Activated CD4-positive, alpha-beta memory T cell treated with anti-CD3 and anti-CD28 coated beads for 36 hours (primary cell): ENCODE measurements at regions of chr1 and their contacts with region 1.

Region 1: DNA sequence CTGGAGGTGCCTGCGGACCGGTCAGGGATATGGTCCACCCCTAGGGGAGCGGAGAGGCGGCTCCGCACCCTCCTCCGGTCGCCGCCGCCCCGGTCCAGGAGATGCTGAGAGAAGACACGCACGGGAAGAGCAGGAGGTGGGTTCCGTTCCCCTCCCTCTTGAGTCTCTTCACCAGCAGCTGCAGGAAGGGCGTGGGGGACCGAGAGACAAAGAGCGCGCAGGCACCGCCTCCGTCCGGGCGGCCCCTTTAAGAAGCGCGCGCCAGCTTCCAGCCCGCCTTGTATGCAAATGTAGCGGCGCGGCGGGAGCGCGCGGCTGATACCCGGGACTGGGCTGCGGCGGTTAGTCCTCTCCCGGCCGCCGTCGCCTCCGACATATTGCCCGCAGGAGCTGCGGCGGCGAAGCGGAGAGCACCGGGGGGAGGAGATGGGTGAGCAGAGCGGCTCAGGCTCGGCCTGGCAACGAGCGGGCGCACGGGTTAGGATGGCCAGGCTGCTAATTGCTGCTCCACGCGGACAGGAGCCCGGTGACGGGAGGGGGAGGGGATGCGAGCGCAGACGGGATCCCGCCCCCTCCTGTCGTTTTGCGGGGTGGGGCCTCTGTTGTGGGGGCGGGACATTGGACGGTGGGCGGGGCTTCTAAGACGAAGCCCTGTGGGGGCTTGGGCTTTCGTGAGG is at the start of gene TMEM39B:
- DNase-seq: peak; percentile 96
- H3K4me3 Mint-ChIP-seq: peak within 1 kb of the TSS; percentile 79
- H3K27ac Mint-ChIP-seq: peak within 1 kb of the TSS; percentile 89
- H3K4me1 Mint-ChIP-seq: peaks cover 32% of the 10 kb centered on the region
- H3K27me3 Mint-ChIP-seq: no peaks in the 10 kb centered on the region
- total RNA-seq, gene TMEM39B: 18.9 to 19.7 TPM

Region 2: GRCh38 chr1:31938174-31938950 is 134.4 kb before region 1 on chr1 and contains the start of gene PTP4A2:
- CTCF ChIA-PET with region 1: no interaction called
- POLR2A ChIA-PET with region 1: no interaction called
- intact Hi-C with region 1: loop called (anchors 5 kb)
- DNase-seq: peak; percentile 94
- H3K4me3 Mint-ChIP-seq: peak within 1 kb of the TSS; percentile 98
- H3K27ac Mint-ChIP-seq: peak within 1 kb of the TSS; percentile 96
- H3K4me1 Mint-ChIP-seq: peaks cover 66% of the 10 kb centered on the region
- H3K27me3 Mint-ChIP-seq: no peaks in the 10 kb centered on the region
- total RNA-seq, gene PTP4A2: 275 to 285 TPM

Region 3: GRCh38 chr1:32013386-32014198 is 59.2 kb before region 1 on chr1 and contains the start of gene KHDRBS1:
- CTCF ChIA-PET with region 1: no interaction called
- POLR2A ChIA-PET with region 1: interaction called, 7 read pairs
- intact Hi-C with region 1: loop called (anchors 1 kb)
- DNase-seq: peak; percentile 99
- H3K4me3 Mint-ChIP-seq: peak within 1 kb of the TSS; percentile 96
- H3K27ac Mint-ChIP-seq: peak within 1 kb of the TSS; percentile 91
- H3K4me1 Mint-ChIP-seq: peaks cover 23% of the 10 kb centered on the region
- H3K27me3 Mint-ChIP-seq: peaks cover 2% of the 10 kb centered on the region
- total RNA-seq, gene KHDRBS1: 200 to 203 TPM

Region 4: GRCh38 chr1:32107742-32108661 is 35.2 kb after region 1 on chr1 and contains the start of gene KPNA6:
- CTCF ChIA-PET with region 1: interaction called, 28 read pairs
- POLR2A ChIA-PET with region 1: interaction called, 37 read pairs
- intact Hi-C with region 1: loop called (anchors 1 kb)
- DNase-seq: peak; percentile 95
- H3K4me3 Mint-ChIP-seq: peak within 1 kb of the TSS; percentile 100
- H3K27ac Mint-ChIP-seq: peak within 1 kb of the TSS; percentile 96
- H3K4me1 Mint-ChIP-seq: peaks cover 37% of the 10 kb centered on the region
- H3K27me3 Mint-ChIP-seq: no peaks in the 10 kb centered on the region
- total RNA-seq, gene KPNA6: 69.8 to 77.6 TPM

Region 5: GRCh38 chr1:32179443-32180185 is 106.9 kb after region 1 on chr1 and contains the start of gene TXLNA:
- CTCF ChIA-PET with region 1: no interaction called
- POLR2A ChIA-PET with region 1: interaction called, 12 read pairs
- intact Hi-C with region 1: loop called (anchors 2 kb)
- DNase-seq: peak; percentile 95
- H3K4me3 Mint-ChIP-seq: peak within 1 kb of the TSS; percentile 91
- H3K27ac Mint-ChIP-seq: peak within 1 kb of the TSS; percentile 96
- H3K4me1 Mint-ChIP-seq: peaks cover 38% of the 10 kb centered on the region
- H3K27me3 Mint-ChIP-seq: no peaks in the 10 kb centered on the region
- total RNA-seq, gene TXLNA: 77.4 to 78.2 TPM

Region 6: DNA sequence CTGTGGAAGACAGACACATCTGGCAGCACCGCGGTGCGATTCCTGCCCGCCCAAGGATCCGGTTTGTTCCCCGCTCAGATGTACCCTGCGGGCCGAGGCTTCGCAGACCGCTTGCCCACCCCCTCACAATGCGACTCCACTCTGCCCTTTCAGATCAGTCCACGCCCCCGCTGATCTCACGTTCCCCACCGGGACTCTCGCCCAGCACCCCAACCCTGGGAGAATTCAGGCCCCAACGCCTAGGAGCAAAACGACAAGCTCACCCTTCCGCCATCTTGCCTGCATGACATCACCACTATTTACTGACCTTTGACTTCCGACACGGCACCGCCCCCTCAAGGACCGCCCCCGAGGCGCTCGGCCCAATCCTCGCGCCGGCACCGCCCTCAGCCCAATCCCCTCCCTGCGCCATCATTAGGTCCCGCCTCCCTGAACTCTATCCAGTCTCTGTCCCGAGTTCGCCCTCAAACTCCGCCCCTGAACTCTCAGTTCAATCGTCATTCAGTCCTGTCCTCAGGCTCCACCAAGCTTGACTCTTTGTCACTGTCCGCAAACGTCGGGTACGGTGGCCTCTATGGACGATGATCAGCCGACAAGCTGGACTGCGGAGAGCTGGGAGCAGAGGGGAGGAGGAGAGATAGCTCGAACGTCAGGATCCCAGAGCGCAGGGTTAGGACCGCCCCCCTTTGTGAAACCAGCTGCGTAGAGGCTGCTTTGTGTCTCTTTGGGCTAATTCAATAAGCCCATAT is 321.6 kb after region 1 on chr1 and contains the start of gene BSDC1:
- CTCF ChIA-PET with region 1: interaction called, 3 read pairs
- POLR2A ChIA-PET with region 1: no interaction called
- intact Hi-C with region 1: loop called (anchors 1 kb)
- DNase-seq: peak; percentile 99
- H3K4me3 Mint-ChIP-seq: peak within 1 kb of the TSS; percentile 94
- H3K27ac Mint-ChIP-seq: peak within 1 kb of the TSS; percentile 90
- H3K4me1 Mint-ChIP-seq: peaks cover 22% of the 10 kb centered on the region
- H3K27me3 Mint-ChIP-seq: no peaks in the 10 kb centered on the region
- total RNA-seq, gene BSDC1: 32.1 to 33.2 TPM